ENCODE measurements at regions of chr22 and their contacts with region 1.

Region 1: DNA sequence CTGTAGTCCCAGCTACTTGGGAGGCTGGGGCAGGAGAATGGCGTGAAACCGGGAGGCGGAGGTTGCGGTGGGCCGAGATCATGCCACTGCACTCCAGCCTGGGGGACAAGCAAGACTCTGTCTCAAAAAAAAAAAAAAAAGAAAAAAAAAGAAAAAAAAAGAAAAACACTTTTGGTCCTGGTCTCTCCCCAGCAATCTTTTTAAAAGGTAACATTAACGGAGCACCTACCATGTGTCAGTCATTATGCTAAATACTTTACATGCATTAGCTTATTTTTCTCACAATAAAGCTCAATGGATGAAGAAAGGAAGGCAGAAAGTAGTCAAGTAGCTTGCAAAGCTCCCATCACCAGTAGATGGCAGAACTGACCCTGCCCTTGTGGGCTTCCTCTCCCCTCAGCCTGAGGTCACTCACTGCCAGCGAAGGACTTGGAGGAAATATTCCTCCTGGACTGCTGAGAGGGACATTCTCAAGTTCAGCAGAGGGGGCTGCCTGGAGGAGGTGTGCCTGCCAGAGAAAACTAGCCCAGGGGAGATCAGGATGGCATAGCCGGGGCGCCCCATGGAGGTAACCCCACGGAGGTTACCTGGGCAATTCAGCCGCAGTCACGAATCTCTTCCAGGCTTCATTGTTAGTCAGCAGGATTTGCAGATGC is 15.5 kb downstream of the APOL3 start:
- DNase-seq: peak; percentile 55 to 70 (median 68)
- H3K4me3 ChIP-seq: no peak overlapping the region
- H3K27ac ChIP-seq: no peak overlapping the region
- H3K4me1 ChIP-seq: no peaks in the 10 kb centered on the region
- H3K27me3 ChIP-seq: no peaks in the 10 kb centered on the region
- CTCF ChIP-seq: peak; percentile 59 to 70 (median 62)
- EP300 ChIP-seq: no peak
- POLR2A ChIP-seq: no peak

Region 2: GRCh38 chr22:36180038-36180880 is 35.2 kb after region 1 on chr22:
- intact Hi-C with region 1: loop called in 2 of 4 experiments (anchors 5 kb)
- DNase-seq: peak; percentile 74 to 88 (median 87)
- H3K4me3 ChIP-seq: no peak overlapping the region
- H3K27ac ChIP-seq: no peak overlapping the region
- H3K4me1 ChIP-seq: no peaks in the 10 kb centered on the region
- H3K27me3 ChIP-seq: no peaks in the 10 kb centered on the region
- CTCF ChIP-seq: peak; percentile 52 to 70 (median 66)
- EP300 ChIP-seq: no peak
- POLR2A ChIP-seq: no peak

Region 3: GRCh38 chr22:36239401-36240171 is 94.6 kb after region 1 on chr22 and contains the start of gene APOL2:
- intact Hi-C with region 1: loop called in 1 of 4 experiments (anchors 10 kb)
- DNase-seq: peak; percentile 85 to 92 (median 90)
- H3K4me3 ChIP-seq: peak within 1 kb of the TSS; percentile 48
- H3K27ac ChIP-seq: peak within 1 kb of the TSS; percentile 66 to 83
- H3K4me1 ChIP-seq: peaks cover 16% of the 10 kb centered on the region
- H3K27me3 ChIP-seq: no peaks in the 10 kb centered on the region
- CTCF ChIP-seq: peak; percentile 60 to 79 (median 78)
- EP300 ChIP-seq: no peak
- POLR2A ChIP-seq: peak; percentile 71
- total RNA-seq, gene APOL2: 21.8 to 38.1 (median 28.2) TPM

Region 4: DNA sequence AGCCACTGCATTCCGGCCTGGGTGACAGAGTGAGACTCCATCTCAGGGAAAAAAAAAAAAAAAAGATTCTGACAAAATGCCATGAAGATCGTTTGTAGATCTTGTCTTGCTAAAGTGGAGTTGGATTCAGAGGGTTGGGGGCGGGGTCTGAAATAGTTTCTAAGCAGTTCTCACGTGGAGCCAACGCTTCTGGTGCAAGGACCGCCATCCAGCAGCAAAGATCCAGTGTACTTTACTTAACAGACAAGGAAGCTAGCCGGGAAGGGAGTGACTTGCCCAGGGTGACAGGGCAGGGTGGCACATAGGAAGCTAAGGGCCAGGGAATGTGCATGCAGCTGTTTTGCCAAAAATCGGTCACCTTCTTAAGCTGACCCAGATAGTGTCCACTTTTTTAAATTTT is 135.4 kb after region 1 on chr22:
- intact Hi-C with region 1: loop called in 1 of 4 experiments (anchors 5 kb)
- DNase-seq: peak in 2 of 5 donors; percentile 16 to 34
- H3K4me3 ChIP-seq: no peak overlapping the region
- H3K27ac ChIP-seq: no peak overlapping the region
- H3K4me1 ChIP-seq: no peaks in the 10 kb centered on the region
- H3K27me3 ChIP-seq: no peaks in the 10 kb centered on the region
- CTCF ChIP-seq: no peak
- EP300 ChIP-seq: no peak
- POLR2A ChIP-seq: no peak